Activated CD4-positive, alpha-beta memory T cell treated with anti-CD3 and anti-CD28 coated beads for 36 hours (primary cell): ENCODE measurements at regions of chr14 and their contacts with region 1.

Region 1: DNA sequence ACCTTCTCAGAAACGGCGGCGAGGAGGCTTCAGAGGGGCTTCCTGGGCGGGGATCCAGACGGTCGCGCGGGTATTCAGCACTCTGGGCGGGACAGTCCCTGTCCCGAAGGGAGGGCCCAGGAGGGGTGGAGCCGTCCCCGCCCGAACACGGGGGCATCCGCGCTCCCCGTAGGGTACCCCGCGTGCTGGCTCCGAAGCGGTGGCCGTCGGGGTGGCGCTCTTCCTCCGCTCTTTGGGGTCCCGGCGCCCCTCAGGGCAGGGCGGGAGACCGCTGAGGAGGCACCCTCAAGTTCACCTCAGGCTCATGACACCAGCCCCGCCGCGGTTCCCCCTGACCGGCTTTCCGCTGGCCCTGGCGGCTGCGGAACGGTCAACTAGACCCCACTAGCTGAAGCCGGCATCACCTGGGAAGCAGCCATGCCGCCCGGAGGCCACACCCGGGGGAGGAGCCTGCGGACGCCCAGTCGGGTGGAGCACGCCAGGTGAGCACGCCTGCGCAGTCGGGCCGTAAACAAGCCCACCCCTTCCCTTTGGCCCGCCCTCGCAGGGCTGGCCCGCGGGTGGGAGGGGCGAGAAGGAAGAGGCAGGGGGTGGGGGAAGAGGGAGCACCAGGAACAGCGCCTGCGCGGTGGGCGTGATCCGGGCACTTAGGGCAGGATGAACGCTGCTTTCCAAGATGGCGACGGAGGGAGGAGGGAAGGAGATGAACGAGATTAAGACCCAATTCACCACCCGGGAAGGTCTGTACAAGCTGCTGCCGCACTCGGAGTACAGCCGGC is at the start of gene WDR20:
- DNase-seq: peak; percentile 100
- H3K4me3 Mint-ChIP-seq: peak within 1 kb of the TSS; percentile 98
- H3K27ac Mint-ChIP-seq: peak within 1 kb of the TSS; percentile 94
- H3K4me1 Mint-ChIP-seq: peaks cover 20% of the 10 kb centered on the region
- H3K27me3 Mint-ChIP-seq: no peaks in the 10 kb centered on the region
- total RNA-seq, gene WDR20: 22.2 to 25.3 TPM

Region 2: DNA sequence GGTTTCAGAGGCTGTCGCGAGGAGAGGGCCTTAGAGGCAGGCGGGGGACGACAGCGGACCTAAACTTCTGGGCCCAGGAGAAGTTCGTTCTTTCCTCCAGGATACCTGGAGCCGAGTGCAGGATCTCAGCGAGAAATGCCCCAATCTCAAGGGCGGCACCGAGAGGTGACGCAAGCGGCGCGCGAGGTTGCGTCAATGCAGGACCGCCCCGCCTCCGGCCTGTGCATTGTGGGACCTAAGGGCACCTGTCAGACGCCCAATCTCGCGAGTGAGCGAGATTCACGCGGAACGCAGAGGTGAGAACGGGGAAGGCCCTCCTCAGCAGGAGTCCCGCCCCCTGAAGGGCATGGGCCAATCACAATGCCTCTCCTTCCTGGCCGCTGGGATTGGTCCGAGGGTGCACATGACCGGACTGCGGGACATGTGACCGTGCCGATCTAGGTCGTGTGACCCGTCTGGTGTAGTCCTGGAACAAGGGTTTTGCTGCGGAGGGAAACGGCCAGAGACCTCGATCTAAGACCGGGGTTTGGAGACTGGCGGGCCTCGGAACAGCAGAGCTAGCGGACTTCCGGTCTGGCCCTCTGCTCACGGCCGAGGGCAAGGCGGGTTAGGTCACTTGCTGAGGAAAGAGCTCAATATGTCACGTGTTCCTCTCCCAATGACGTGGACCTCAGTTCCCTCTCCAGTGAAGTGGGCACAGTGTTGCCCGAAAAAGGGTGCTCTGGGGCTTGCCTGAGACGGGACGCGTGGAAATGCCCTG is 191.4 kb before region 1 on chr14:
- CTCF ChIA-PET with region 1: no interaction called
- POLR2A ChIA-PET with region 1: no interaction called
- intact Hi-C with region 1: loop called (anchors 1 kb)
- DNase-seq: peak; percentile 100
- H3K4me3 Mint-ChIP-seq: peak overlapping the region; percentile 92
- H3K27ac Mint-ChIP-seq: peak overlapping the region; percentile 95
- H3K4me1 Mint-ChIP-seq: peaks cover 15% of the 10 kb centered on the region
- H3K27me3 Mint-ChIP-seq: peaks cover 20% of the 10 kb centered on the region

Region 3: DNA sequence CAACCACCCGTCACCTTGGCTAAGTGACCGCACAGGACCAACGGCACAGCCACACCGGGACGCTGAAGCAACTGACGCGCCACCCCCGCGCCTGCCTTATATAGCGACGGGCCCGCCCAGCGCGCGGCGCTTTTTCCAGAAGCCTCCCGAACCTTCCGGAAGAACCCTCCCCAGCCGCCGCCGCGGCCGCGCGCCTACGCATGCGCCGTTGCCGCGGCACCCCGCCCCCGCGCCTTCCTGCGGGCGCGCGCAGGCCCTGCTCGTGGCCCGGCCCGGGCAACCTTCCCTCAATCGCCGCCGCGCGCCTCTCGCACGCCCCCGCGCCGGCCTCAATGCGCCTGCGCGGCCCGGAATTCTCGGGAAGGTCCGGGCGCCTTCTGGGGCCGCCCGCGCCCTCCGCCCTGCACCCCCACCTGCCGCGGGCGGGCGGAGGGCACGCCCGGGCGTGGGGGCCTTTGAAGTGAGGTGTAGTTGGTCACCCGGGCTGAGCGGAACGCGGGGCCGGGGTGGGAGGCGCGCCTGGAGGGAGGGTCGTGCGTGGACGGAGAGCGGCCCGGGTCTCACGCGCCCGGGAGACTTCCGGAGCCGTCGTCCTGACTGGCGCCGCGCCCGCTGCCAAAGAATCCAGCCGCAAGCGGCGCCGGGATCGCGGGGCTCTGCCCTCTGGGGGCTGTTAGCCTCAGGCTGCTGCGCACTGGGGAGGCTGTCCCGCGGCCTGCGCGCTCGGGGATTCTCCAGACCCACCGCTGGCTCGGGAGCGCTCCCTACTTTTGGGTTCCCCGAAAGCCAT is 52.3 kb before region 1 on chr14 and contains the start of gene HSP90AA1:
- CTCF ChIA-PET with region 1: no interaction called
- POLR2A ChIA-PET with region 1: interaction called, 6 read pairs
- intact Hi-C with region 1: loop called (anchors 1 kb)
- DNase-seq: peak; percentile 96
- H3K4me3 Mint-ChIP-seq: peak within 1 kb of the TSS; percentile 84
- H3K27ac Mint-ChIP-seq: peak within 1 kb of the TSS; percentile 94
- H3K4me1 Mint-ChIP-seq: peaks cover 43% of the 10 kb centered on the region
- H3K27me3 Mint-ChIP-seq: no peaks in the 10 kb centered on the region
- total RNA-seq, gene HSP90AA1: 1,107 to 1,148 TPM

Region 4: GRCh38 chr14:102200690-102201352 is 61.4 kb after region 1 on chr14:
- CTCF ChIA-PET with region 1: no interaction called
- POLR2A ChIA-PET with region 1: interaction called, 3 read pairs
- intact Hi-C with region 1: loop called (anchors 5 kb)
- DNase-seq: peak; percentile 23
- H3K4me3 Mint-ChIP-seq: no peak overlapping the region
- H3K27ac Mint-ChIP-seq: peak overlapping the region; percentile 43
- H3K4me1 Mint-ChIP-seq: peaks cover 54% of the 10 kb centered on the region
- H3K27me3 Mint-ChIP-seq: no peaks in the 10 kb centered on the region

Region 5: GRCh38 chr14:102220031-102220430 is 80.6 kb after region 1 on chr14:
- CTCF ChIA-PET with region 1: no interaction called
- POLR2A ChIA-PET with region 1: no interaction called
- intact Hi-C with region 1: no loop called
- DNase-seq: peak; percentile 59
- H3K4me3 Mint-ChIP-seq: no peak overlapping the region
- H3K27ac Mint-ChIP-seq: no peak overlapping the region
- H3K4me1 Mint-ChIP-seq: peaks cover 22% of the 10 kb centered on the region
- H3K27me3 Mint-ChIP-seq: no peaks in the 10 kb centered on the region